Activated naive CD4-positive, alpha-beta T cell treated with anti-CD3 and anti-CD28 coated beads for 36 hours (primary cell): ENCODE measurements at regions of chr9 and their contacts with region 1.

Region 1: DNA sequence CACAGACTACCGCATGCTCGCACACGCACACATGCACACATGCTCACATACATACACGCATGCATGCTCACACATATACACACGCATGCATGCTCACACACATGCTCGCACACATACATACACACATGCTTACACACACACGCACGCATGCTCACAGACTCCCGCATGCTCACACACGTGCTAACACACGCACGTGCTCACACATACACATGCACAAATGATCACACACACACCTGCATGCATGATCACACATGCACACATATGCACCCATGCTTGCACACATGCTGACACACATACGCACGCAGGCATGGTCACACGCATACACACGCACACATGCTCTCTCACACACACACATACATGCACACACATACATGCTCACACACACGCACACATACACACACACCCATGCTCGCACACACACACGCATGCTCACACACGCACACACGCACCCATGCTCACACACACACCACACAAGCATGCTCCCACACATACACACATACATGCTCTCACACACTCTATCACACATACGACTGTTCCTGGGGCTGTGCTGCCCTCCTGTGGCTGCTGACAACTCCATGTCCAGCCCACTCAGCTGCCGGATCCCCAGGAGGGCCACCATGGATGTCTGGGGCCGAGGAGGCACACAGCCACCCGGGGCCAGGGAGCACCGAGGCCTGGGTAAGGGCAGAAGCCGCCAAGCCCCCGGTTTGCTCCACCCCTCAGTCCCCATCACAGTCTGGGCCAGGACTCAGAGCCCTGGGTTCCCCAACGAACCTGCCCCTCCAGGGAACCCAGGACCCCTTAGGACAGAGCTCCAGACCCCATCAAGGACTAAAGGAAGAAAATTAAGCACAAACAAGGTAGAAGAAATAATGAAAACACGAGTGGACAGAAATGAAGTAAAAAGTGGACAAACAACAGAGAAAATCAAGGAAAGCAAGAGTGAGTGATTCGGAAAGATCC is 31.4 kb upstream of the EGFL7 start:
- DNase-seq: peak; percentile 82
- H3K4me3 Mint-ChIP-seq: no peak overlapping the region
- H3K27ac Mint-ChIP-seq: no peak overlapping the region
- H3K4me1 Mint-ChIP-seq: no peaks in the 10 kb centered on the region
- H3K27me3 Mint-ChIP-seq: peaks cover 5% of the 10 kb centered on the region

Region 2: DNA sequence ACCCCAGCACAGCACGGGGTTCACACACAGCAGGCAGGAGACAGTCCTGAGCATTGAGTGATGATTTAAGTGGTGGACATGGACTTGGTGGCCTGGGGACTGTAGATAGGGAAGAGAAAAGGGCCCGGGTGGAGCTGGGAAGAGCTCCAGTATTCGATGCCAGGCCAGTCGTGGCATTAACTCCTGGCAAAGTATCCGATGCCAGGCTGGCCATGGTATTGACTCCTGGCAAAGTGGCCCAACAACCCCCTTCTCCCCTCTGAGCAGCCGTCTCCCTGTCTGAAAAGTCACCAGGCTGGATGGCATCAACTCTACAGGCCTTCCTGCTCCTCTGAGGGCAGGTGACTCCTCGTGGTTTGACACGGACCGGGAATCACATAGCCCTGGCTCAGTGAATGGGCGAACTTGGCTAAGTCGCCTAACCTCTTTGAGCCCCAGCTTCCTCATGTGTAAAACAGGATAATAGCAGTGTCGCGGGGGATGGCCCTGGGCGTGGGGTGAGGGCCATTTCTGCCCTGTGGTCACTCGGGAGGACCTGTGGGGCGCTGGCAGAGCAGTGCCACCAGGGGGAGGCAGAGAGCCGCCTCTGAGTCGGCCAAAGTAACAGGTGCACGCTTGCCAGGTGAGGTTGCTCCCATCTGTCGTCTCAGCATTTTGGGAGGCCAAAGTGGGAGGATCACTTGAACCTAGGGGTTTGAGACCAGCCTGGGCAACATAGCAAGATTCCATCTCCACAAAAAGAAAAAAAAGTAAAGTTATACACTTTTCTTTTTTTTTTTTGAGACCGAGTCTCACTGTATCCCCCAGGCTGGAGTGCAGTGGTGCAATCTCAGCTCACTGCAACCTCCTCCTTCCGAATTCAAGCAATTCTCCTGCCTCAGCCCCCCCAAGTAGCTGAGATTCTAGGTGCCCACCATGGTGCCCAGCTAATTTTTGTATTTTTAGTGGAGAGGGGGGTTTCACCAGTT is 142.8 kb before region 1 on chr9:
- CTCF ChIA-PET with region 1: interaction called, 88 read pairs
- intact Hi-C with region 1: loop called (anchors 1 kb)
- DNase-seq: peak; percentile 82
- H3K4me3 Mint-ChIP-seq: no peak overlapping the region
- H3K27ac Mint-ChIP-seq: no peak overlapping the region
- H3K4me1 Mint-ChIP-seq: peaks cover 5% of the 10 kb centered on the region
- H3K27me3 Mint-ChIP-seq: no peaks in the 10 kb centered on the region

Region 3: GRCh38 chr9:136533775-136534157 is 97.6 kb before region 1 on chr9:
- CTCF ChIA-PET with region 1: no interaction called
- intact Hi-C with region 1: loop called (anchors 5 kb)
- DNase-seq: peak; percentile 94
- H3K4me3 Mint-ChIP-seq: peak overlapping the region; percentile 57
- H3K27ac Mint-ChIP-seq: peak overlapping the region; percentile 91
- H3K4me1 Mint-ChIP-seq: peaks cover 73% of the 10 kb centered on the region
- H3K27me3 Mint-ChIP-seq: no peaks in the 10 kb centered on the region

Region 4: GRCh38 chr9:136551401-136552116 is 79.8 kb before region 1 on chr9:
- CTCF ChIA-PET with region 1: no interaction called
- intact Hi-C with region 1: loop called (anchors 2 kb)
- DNase-seq: no peak
- H3K4me3 Mint-ChIP-seq: no peak overlapping the region
- H3K27ac Mint-ChIP-seq: peak overlapping the region; percentile 47
- H3K4me1 Mint-ChIP-seq: peaks cover 33% of the 10 kb centered on the region
- H3K27me3 Mint-ChIP-seq: no peaks in the 10 kb centered on the region

Region 5: GRCh38 chr9:136740971-136741882 is 109.9 kb after region 1 on chr9:
- CTCF ChIA-PET with region 1: no interaction called
- intact Hi-C with region 1: no loop called
- DNase-seq: peak; percentile 38
- H3K4me3 Mint-ChIP-seq: peak overlapping the region; percentile 61
- H3K27ac Mint-ChIP-seq: no peak overlapping the region
- H3K4me1 Mint-ChIP-seq: peaks cover 18% of the 10 kb centered on the region
- H3K27me3 Mint-ChIP-seq: no peaks in the 10 kb centered on the region